ENCODE measurements at regions of chr13 and their contacts with region 1.

Region 1: DNA sequence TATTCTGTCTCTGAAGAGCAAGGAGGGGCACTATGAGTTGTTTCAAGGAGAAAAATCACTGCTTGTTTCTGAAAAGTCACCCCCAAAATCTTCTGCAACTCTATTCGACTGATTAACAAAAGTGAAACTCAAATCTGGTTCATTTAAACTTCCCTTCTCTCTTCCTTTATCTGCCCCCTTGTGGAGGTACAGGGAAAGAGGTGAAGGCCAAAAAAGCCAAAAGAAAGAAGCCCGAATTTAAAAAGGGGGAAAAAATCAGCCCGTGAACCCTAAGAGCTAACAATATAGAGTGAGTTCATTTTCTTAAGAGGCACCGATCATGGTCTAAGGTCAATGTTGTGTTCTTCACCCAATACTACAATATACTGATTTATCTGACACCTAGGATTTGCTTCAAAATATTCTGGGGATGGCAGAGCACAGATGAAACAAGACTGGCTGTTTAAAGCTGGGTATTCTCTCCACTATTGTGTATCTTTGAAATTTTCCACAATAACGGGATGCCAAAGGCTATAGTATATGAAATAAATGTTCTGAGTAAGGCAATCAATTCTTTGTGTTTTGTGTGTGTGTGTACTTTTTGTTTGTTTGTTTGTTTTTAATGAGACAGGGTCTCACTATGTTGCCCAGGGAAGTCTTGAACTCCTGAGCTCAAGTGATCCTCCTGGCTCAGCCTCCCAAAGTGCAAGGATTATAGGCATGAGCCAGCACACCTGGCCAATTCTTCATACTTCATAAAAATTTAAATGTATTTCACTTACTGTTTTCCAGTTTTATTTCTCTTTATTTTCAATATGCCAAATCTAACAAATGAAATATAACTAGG is 55.0 kb upstream of the EEF1AKMT1 start:
- DNase-seq: peak; percentile 12
- H3K4me3 ChIP-seq: peak overlapping the region in 3 of 4 donors; percentile 4 to 35 (median 6)
- H3K27ac ChIP-seq: peak overlapping the region in 2 of 4 donors; percentile 24 to 35
- H3K4me1 ChIP-seq: peaks cover 0 to 25% (median 7%) of the 10 kb centered on the region in 4 donors
- H3K27me3 ChIP-seq: no peaks in the 10 kb centered on the region
- CTCF ChIP-seq: peak; percentile 74 to 84 (median 80)
- EP300 ChIP-seq: no peak
- POLR2A ChIP-seq: no peak

Region 2: GRCh38 chr13:20495082-20496023 is 333.4 kb before region 1 on chr13:
- in situ Hi-C with region 1: loop called in 3 of 4 experiments (anchors 10 to 25 kb)
- intact Hi-C with region 1: no loop called
- DNase-seq: peak; percentile 73
- H3K4me3 ChIP-seq: no peak overlapping the region
- H3K27ac ChIP-seq: peak overlapping the region in 2 of 4 donors; percentile 25 to 34
- H3K4me1 ChIP-seq: peaks cover 5 to 13% (median 8%) of the 10 kb centered on the region in 4 donors
- H3K27me3 ChIP-seq: no peaks in the 10 kb centered on the region
- CTCF ChIP-seq: peak; percentile 91 to 98 (median 94)
- EP300 ChIP-seq: no peak
- POLR2A ChIP-seq: peak; percentile 12

Region 3: GRCh38 chr13:20713751-20714150 is 115.0 kb before region 1 on chr13:
- in situ Hi-C with region 1: loop called in 2 of 4 experiments (anchors 10 to 25 kb)
- intact Hi-C with region 1: loop called (anchors 10 kb)
- DNase-seq: no peak
- H3K4me3 ChIP-seq: no peak overlapping the region
- H3K27ac ChIP-seq: peak overlapping the region in 3 of 4 donors; percentile 40 to 44 (median 43)
- H3K4me1 ChIP-seq: peaks cover 0 to 14% (median 9%) of the 10 kb centered on the region in 4 donors
- H3K27me3 ChIP-seq: peaks cover 5% of the 10 kb centered on the region
- CTCF ChIP-seq: no peak
- EP300 ChIP-seq: no peak
- POLR2A ChIP-seq: no peak

Measured in transverse colon (tissue), 4 donors.